B cell (primary cell): ENCODE measurements at regions of chr22 and their contacts with region 1.

Region 1: GRCh38 chr22:37817705-37818408 is 5.3 kb upstream of the GALR3 start:
- DNase-seq: peak; percentile 86
- ATAC-seq: peak; percentile 90
- H3K4me3 ChIP-seq: peak overlapping the region in 4 of 5 experiments; percentile 29 to 51 (median 40)
- H3K4me3 Mint-ChIP-seq: peak overlapping the region; percentile 82
- H3K27ac ChIP-seq: no peak overlapping the region
- H3K27ac Mint-ChIP-seq: no peak overlapping the region
- H3K4me1 ChIP-seq: peaks cover 19 to 20% of the 10 kb centered on the region in 2 donors
- H3K4me1 Mint-ChIP-seq: peaks cover 10% of the 10 kb centered on the region
- H3K27me3 ChIP-seq: peaks cover 0 to 44% (median 9%) of the 10 kb centered on the region in 4 experiments
- H3K27me3 Mint-ChIP-seq: peaks cover 19% of the 10 kb centered on the region
- CTCF ChIP-seq: peak; percentile 90

Region 2: DNA sequence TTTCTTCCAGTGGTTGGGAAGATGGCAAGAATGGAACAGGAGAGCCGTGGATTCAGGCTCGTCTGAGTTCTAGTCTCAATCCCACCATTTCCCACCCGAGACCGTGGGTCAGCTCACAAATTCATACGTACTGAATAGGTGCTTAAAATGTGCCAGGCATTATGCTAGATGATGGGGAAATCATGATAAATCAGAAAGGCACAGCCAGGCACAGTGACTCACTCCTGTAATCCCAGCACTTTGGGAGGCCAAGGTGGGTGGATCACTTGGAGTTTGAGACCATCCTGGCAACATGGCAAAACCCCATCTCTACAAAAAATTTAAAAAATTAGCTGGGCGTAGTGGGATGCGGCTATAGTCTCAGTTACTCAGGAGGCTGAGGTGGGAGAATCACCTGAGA is 114.0 kb before region 1 on chr22:
- CTCF ChIA-PET with region 1: no interaction called
- POLR2A ChIA-PET with region 1: no interaction called
- intact Hi-C with region 1: no loop called
- DNase-seq: no peak
- ATAC-seq: no peak
- H3K4me3 ChIP-seq: no peak overlapping the region
- H3K4me3 Mint-ChIP-seq: no peak overlapping the region
- H3K27ac ChIP-seq: no peak overlapping the region
- H3K27ac Mint-ChIP-seq: no peak overlapping the region
- H3K4me1 ChIP-seq: no peaks in the 10 kb centered on the region
- H3K4me1 Mint-ChIP-seq: no peaks in the 10 kb centered on the region
- H3K27me3 ChIP-seq: no peaks in the 10 kb centered on the region
- H3K27me3 Mint-ChIP-seq: no peaks in the 10 kb centered on the region
- CTCF ChIP-seq: no peak

Region 3: GRCh38 chr22:37777122-37777687 is 40.7 kb before region 1 on chr22:
- CTCF ChIA-PET with region 1: no interaction called
- POLR2A ChIA-PET with region 1: no interaction called
- intact Hi-C with region 1: no loop called
- DNase-seq: no peak
- ATAC-seq: peak; percentile 33
- H3K4me3 ChIP-seq: no peak overlapping the region
- H3K4me3 Mint-ChIP-seq: no peak overlapping the region
- H3K27ac ChIP-seq: no peak overlapping the region
- H3K27ac Mint-ChIP-seq: no peak overlapping the region
- H3K4me1 ChIP-seq: peaks cover 0 to 10% of the 10 kb centered on the region in 2 donors
- H3K4me1 Mint-ChIP-seq: peaks cover 12% of the 10 kb centered on the region
- H3K27me3 ChIP-seq: no peaks in the 10 kb centered on the region
- H3K27me3 Mint-ChIP-seq: no peaks in the 10 kb centered on the region
- CTCF ChIP-seq: no peak

Region 4: DNA sequence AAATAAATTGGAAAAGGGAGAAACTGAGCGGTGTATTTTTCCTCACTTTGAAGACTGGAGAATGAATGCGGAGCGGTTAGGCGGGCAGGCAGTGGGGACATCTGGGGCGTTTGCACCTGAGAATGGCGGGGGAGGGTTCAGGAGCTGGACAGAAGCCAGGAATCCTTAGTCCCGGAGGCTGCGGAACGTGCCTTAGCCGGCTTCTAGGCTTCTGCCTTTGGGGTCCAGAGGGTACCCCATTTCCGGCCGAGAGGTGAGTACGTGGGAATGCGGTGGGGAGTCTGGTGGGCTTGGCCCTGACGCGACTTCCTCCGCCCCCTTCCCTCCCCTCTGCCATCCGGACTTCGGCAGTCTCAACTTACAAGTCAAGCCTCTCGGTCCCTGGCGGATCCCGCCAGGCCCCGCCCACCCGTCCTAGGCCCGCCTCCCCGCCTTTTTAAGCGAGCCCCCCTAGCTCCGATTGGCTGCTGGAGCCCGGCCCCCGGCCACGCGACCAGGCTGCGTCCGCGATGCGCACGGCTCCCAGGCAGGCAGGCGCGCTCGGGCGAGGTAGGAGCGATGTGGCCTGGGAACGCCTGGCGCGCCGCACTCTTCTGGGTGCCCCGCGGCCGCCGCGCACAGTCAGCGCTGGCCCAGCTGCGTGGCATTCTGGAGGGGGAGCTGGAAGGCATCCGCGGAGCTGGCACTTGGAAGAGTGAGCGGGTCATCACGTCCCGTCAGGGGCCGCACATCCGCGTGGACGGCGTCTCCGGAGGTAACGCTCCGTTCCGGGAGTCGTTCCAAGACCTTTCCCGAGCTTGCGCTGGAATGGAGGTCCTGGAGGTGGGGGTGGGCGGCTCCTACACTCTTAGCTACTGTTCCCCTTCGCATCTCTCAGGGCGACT is 10.2 kb before region 1 on chr22 and contains the start of gene GCAT:
- CTCF ChIA-PET with region 1: interaction called, 30 read pairs
- POLR2A ChIA-PET with region 1: interaction called, 4 read pairs
- intact Hi-C with region 1: no loop called
- DNase-seq: peak; percentile 88
- ATAC-seq: peak; percentile 97
- H3K4me3 ChIP-seq: peak within 1 kb of the TSS; percentile 17 to 61 (median 53)
- H3K4me3 Mint-ChIP-seq: peak within 1 kb of the TSS; percentile 77
- H3K27ac ChIP-seq: no peak within 1 kb of the TSS
- H3K27ac Mint-ChIP-seq: no peak within 1 kb of the TSS
- H3K4me1 ChIP-seq: peaks cover 51 to 60% of the 10 kb centered on the region in 2 donors
- H3K4me1 Mint-ChIP-seq: peaks cover 33% of the 10 kb centered on the region
- H3K27me3 ChIP-seq: peaks cover 0 to 91% (median 51%) of the 10 kb centered on the region in 4 experiments
- H3K27me3 Mint-ChIP-seq: peaks cover 58% of the 10 kb centered on the region
- CTCF ChIP-seq: no peak
- total RNA-seq, gene GCAT: 0.47 TPM in 1 of 2 replicates, not detected in the other

Region 5: GRCh38 chr22:37843741-37843990 is 25.8 kb after region 1 on chr22:
- CTCF ChIA-PET with region 1: interaction called, 20 read pairs
- POLR2A ChIA-PET with region 1: interaction called, 4 read pairs
- intact Hi-C with region 1: no loop called
- DNase-seq: no peak
- ATAC-seq: peak; percentile 35
- H3K4me3 ChIP-seq: peak overlapping the region; percentile 46 to 78 (median 65)
- H3K4me3 Mint-ChIP-seq: peak overlapping the region; percentile 91
- H3K27ac ChIP-seq: peak overlapping the region in 1 of 2 donors; percentile 76
- H3K27ac Mint-ChIP-seq: peak overlapping the region; percentile 87
- H3K4me1 ChIP-seq: peaks cover 11 to 25% of the 10 kb centered on the region in 2 donors
- H3K4me1 Mint-ChIP-seq: peaks cover 16% of the 10 kb centered on the region
- H3K27me3 ChIP-seq: no peaks in the 10 kb centered on the region
- H3K27me3 Mint-ChIP-seq: no peaks in the 10 kb centered on the region
- CTCF ChIP-seq: no peak

Region 6: DNA sequence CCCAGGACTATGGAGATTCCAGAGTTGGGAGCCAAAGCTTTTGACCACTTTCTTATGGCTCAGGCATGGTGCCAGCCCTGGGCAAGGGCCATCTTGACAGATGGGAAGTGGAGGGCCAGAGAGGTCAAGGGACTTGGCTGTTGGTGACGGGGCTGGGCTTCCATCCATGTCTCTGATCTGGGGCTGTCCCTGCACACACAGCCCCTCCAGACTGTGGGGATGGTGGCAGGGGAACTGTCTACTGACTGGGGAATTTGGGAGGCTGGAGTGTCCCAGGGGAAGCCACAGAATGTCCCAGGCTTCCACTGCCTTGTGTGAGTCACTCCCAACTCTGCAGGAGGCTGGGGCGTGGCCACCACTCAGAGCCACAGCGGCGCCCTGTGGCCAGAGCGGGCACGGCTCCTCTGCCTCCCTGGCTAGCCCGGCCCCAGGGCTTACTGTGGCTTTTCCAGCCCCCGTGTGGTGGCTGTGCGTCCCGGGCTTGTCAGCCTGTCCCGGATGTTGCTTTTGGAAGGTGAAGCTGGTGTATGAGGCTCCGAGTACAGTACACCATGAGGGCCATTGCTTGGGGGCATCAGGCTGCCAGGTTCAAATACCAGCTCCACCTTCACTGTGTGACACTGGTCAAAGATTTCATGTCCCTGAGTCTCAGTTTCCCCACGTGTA is 116.0 kb after region 1 on chr22:
- CTCF ChIA-PET with region 1: interaction called, 22 read pairs
- POLR2A ChIA-PET with region 1: no interaction called
- intact Hi-C with region 1: no loop called
- DNase-seq: peak; percentile 83
- ATAC-seq: peak; percentile 99
- H3K4me3 ChIP-seq: no peak overlapping the region
- H3K4me3 Mint-ChIP-seq: no peak overlapping the region
- H3K27ac ChIP-seq: no peak overlapping the region
- H3K27ac Mint-ChIP-seq: no peak overlapping the region
- H3K4me1 ChIP-seq: peaks cover 3 to 12% of the 10 kb centered on the region in 2 donors
- H3K4me1 Mint-ChIP-seq: peaks cover 19% of the 10 kb centered on the region
- H3K27me3 ChIP-seq: no peaks in the 10 kb centered on the region
- H3K27me3 Mint-ChIP-seq: no peaks in the 10 kb centered on the region
- CTCF ChIP-seq: peak; percentile 86

Region 7: GRCh38 chr22:37953437-37954179 is 135.8 kb after region 1 on chr22 and contains the starts of genes C22orf23 and POLR2F:
- CTCF ChIA-PET with region 1: interaction called, 3 read pairs
- POLR2A ChIA-PET with region 1: no interaction called
- intact Hi-C with region 1: loop called (anchors 5 kb)
- DNase-seq: peak; percentile 97
- ATAC-seq: peak; percentile 94
- H3K4me3 ChIP-seq: peak within 1 kb of the TSS; percentile 64 to 99 (median 88)
- H3K4me3 Mint-ChIP-seq: peak within 1 kb of the TSS; percentile 99
- H3K27ac ChIP-seq: peak within 1 kb of the TSS; percentile 24 to 76
- H3K27ac Mint-ChIP-seq: peak within 1 kb of the TSS; percentile 97
- H3K4me1 ChIP-seq: peaks cover 17 to 20% of the 10 kb centered on the region in 2 donors
- H3K4me1 Mint-ChIP-seq: peaks cover 26% of the 10 kb centered on the region
- H3K27me3 ChIP-seq: peaks cover 2 to 14% (median 8%) of the 10 kb centered on the region in 4 experiments
- H3K27me3 Mint-ChIP-seq: peaks cover 14% of the 10 kb centered on the region
- CTCF ChIP-seq: no peak
- total RNA-seq, gene C22orf23: not detected in 2 replicates
- total RNA-seq, gene POLR2F: 39.3 and 41.8 TPM in 2 replicates

Region 8: GRCh38 chr22:37965940-37966664 is 148.2 kb after region 1 on chr22:
- CTCF ChIA-PET with region 1: interaction called, 32 read pairs
- POLR2A ChIA-PET with region 1: no interaction called
- intact Hi-C with region 1: no loop called
- DNase-seq: no peak
- ATAC-seq: no peak
- H3K4me3 ChIP-seq: no peak overlapping the region
- H3K4me3 Mint-ChIP-seq: no peak overlapping the region
- H3K27ac ChIP-seq: no peak overlapping the region
- H3K27ac Mint-ChIP-seq: no peak overlapping the region
- H3K4me1 ChIP-seq: no peaks in the 10 kb centered on the region
- H3K4me1 Mint-ChIP-seq: peaks cover 4% of the 10 kb centered on the region
- H3K27me3 ChIP-seq: no peaks in the 10 kb centered on the region
- H3K27me3 Mint-ChIP-seq: no peaks in the 10 kb centered on the region
- CTCF ChIP-seq: no peak